PC-9 (cell line): ENCODE measurements at regions of chr5 and their contacts with region 1.

Region 1: GRCh38 chr5:154729613-154730012 is 25.6 kb upstream of the LARP1 start:
- DNase-seq: no peak
- H3K4me3 ChIP-seq: no peak overlapping the region
- H3K27ac ChIP-seq: no peak overlapping the region
- H3K4me1 ChIP-seq: no peaks in the 10 kb centered on the region
- H3K27me3 ChIP-seq: no peaks in the 10 kb centered on the region
- CTCF ChIP-seq: no peak

Region 2: DNA sequence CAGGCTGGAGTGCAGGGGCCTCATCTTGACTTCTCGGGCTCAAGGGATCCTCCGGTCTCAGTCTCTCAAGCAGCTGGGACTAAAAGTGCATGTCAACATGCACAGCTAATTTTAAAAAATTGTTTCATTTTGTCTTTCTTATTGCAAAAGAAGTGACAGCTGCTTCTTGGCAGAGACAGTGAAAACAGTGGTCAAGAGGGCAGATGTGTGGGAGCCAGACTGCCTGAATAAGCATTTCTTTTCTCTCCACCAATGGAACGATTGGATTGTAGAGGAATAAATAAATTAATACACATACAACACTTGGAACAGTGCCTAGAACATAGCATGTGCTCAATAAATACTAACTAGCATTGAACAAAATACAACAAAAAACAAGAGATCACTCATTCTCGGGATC is 256.5 kb after region 1 on chr5:
- CTCF ChIA-PET with region 1: no interaction called
- POLR2A ChIA-PET with region 1: interaction called, 11 read pairs
- intact Hi-C with region 1: no loop called
- DNase-seq: no peak
- H3K4me3 ChIP-seq: no peak overlapping the region
- H3K27ac ChIP-seq: no peak overlapping the region
- H3K4me1 ChIP-seq: no peaks in the 10 kb centered on the region
- H3K27me3 ChIP-seq: peaks cover 35% of the 10 kb centered on the region
- CTCF ChIP-seq: no peak